PC-9 (cell line): ENCODE measurements at regions of chr2 and their contacts with region 1.

Region 1: GRCh38 chr2:241774646-241775222 is 1.9 kb upstream of the GAL3ST2 start:
- DNase-seq: peak; percentile 64 to 91
- H3K4me3 ChIP-seq: no peak overlapping the region
- H3K27ac ChIP-seq: no peak overlapping the region
- H3K4me1 ChIP-seq: peaks cover 18% of the 10 kb centered on the region
- H3K27me3 ChIP-seq: no peaks in the 10 kb centered on the region
- CTCF ChIP-seq: no peak

Region 2: DNA sequence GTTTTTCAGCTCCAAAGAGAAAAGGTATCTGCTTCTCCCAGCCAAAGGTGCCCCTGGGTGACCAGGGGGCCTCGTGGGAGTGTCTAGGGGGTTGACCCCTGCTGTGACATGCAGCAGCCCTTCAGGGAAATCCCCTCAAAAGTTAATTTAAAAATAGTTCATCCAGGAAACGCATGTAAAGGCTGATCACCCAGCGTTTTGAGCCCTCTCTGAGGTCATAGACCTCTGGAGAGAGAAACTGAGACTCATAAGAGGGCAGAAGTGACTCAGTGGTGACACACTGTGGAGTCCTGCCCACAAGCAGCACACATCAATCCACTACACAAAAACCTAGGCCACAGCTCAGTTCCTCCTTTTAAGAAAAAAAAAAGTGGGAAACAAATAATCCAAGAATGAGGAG is 13.8 kb after region 1 on chr2:
- CTCF ChIA-PET with region 1: interaction called, 5 read pairs
- POLR2A ChIA-PET with region 1: interaction called, 3 read pairs
- intact Hi-C with region 1: loop called (anchors 2 kb)
- DNase-seq: no peak
- H3K4me3 ChIP-seq: no peak overlapping the region
- H3K27ac ChIP-seq: no peak overlapping the region
- H3K4me1 ChIP-seq: peaks cover 8% of the 10 kb centered on the region
- H3K27me3 ChIP-seq: peaks cover 9% of the 10 kb centered on the region; the same call in 1 of the 2 replicates
- CTCF ChIP-seq: no peak

Region 3: DNA sequence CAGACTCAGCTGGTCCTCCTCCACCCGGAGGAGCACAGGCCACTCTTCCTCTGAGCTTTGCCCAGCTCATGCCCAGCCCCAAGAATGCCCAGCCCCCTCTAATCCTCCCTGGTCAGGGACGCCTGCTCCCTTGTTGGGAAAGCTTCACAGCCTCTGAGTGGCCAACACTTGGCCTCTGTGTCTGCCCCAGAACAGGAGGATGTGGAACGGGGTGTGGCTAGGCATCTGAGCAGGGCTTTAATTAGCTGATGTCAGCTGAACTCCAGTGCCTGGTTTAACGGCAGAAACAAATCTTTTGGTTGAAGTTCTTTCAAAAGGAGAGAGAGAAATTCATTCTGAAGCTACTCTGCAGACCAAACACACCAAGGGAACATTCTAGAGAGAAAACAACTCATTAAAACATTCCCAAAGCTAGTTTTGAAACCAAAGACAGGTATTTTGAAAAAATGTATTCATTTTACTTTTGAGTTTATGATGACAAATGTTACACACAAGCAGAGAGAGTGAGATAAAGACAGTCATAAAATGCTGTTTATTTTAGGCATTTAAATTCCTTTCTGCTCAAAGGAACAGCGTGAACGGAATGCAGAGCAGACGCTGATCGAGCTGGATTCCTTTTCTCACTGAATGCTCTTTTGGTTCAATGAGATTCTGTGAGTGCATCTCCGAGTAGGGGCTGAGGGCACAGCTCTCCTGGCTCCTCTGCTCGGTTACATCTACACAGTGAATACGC is 158.6 kb after region 1 on chr2:
- CTCF ChIA-PET with region 1: no interaction called
- POLR2A ChIA-PET with region 1: no interaction called
- intact Hi-C with region 1: no loop called
- DNase-seq: no peak
- H3K4me3 ChIP-seq: no peak overlapping the region
- H3K27ac ChIP-seq: no peak overlapping the region
- H3K4me1 ChIP-seq: no peaks in the 10 kb centered on the region
- H3K27me3 ChIP-seq: peaks cover 68% of the 10 kb centered on the region
- CTCF ChIP-seq: no peak